Natural killer cell (primary cell): ENCODE measurements at regions of chr3 and their contacts with region 1.

Region 1: DNA sequence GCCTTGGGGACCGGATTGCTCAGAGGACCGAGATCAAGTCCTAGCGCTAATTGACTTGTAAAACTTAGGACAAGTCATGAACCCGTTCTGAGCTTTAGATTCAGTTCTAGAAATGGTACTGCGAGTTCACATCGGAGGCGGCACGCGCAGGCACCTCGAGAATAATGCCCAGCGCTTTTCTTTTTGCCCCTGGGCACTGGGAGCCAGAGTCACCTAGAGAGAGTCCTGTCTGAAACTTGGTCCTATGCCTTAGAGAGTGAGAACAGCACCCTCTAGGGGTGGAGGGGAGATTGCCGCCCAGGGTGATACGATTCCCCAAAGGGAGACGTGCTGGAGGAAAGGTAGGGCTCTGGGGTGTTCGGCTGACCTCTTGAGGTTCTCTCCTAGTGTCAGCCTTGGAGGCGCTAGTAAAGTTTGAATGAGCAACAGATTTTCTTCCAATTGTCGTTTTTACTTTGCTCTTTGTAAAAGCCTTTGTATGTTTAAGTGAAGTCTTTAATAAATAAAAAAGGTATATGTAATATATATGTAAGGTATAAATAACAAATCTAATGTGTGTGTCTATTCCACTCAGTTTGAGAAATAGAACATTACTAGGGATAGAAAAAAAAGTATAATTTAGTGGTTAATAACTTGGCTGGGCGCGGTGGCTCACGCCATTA is 826 bp downstream of the EEF1AKMT4 start:
- DNase-seq: peak; percentile 82 to 93
- ATAC-seq: peak; percentile 63 to 82 (median 64)
- H3K4me3 ChIP-seq: peak overlapping the region; percentile 76
- H3K4me3 Mint-ChIP-seq: peak overlapping the region; percentile 100
- H3K27ac ChIP-seq: peak overlapping the region; percentile 22
- H3K27ac Mint-ChIP-seq: peak overlapping the region; percentile 94 to 99
- H3K4me1 ChIP-seq: peaks cover 20% of the 10 kb centered on the region
- H3K4me1 Mint-ChIP-seq: peaks cover 17 to 21% of the 10 kb centered on the region in 2 donors
- H3K27me3 ChIP-seq: no peaks in the 10 kb centered on the region
- H3K27me3 Mint-ChIP-seq: no peaks in the 10 kb centered on the region
- CTCF ChIP-seq: peak; percentile 93

Region 2: GRCh38 chr3:184050217-184050847 is 200.0 kb before region 1 on chr3:
- intact Hi-C with region 1: no loop called
- DNase-seq: no peak
- ATAC-seq: no peak
- H3K4me3 ChIP-seq: no peak overlapping the region
- H3K4me3 Mint-ChIP-seq: no peak overlapping the region
- H3K27ac ChIP-seq: no peak overlapping the region
- H3K27ac Mint-ChIP-seq: no peak overlapping the region
- H3K4me1 ChIP-seq: no peaks in the 10 kb centered on the region
- H3K4me1 Mint-ChIP-seq: no peaks in the 10 kb centered on the region
- H3K27me3 ChIP-seq: no peaks in the 10 kb centered on the region
- H3K27me3 Mint-ChIP-seq: peaks cover 0 to 9% of the 10 kb centered on the region in 2 donors
- CTCF ChIP-seq: no peak

Region 3: DNA sequence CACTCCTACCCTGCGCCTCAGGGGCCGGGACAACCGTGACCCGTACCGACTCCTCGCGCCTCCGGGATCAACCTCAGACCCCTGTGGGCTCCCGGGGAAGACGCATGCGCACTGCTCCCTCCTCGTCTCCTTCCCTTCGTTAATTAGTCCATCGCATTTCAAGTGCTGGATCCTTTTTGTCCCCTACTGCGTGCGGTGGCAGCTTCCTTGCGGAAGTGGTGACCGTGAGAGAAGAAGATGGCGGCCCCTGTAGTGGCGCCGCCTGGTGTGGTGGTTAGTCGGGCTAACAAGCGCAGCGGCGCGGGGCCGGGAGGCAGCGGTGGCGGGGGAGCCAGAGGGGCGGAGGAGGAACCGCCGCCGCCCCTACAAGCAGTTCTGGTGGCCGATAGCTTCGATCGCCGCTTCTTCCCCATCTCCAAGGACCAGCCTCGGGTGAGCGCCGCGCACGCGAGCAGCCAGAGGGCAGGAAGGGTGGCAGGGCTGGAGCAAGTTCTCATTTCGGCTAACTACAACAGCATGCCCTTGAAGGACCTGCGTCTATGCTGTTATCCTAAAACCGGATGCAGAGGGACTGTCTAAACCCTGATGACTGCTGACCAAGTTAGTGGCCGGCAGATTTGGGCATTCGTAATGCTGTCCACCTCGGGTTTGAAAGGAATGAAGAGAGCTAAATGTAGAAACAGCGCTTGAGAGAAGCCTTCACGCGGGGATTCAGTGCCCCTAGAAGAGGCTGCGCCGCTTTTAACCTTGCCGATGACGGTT is 115.0 kb before region 1 on chr3 and contains the start of gene EIF2B5:
- intact Hi-C with region 1: loop called (anchors 10 kb)
- DNase-seq: peak; percentile 73 to 94
- ATAC-seq: peak; percentile 90 to 94 (median 93)
- H3K4me3 ChIP-seq: peak within 1 kb of the TSS; percentile 97
- H3K4me3 Mint-ChIP-seq: peak within 1 kb of the TSS; percentile 99
- H3K27ac ChIP-seq: peak within 1 kb of the TSS; percentile 87
- H3K27ac Mint-ChIP-seq: peak within 1 kb of the TSS; percentile 93
- H3K4me1 ChIP-seq: peaks cover 18% of the 10 kb centered on the region
- H3K4me1 Mint-ChIP-seq: peaks cover 48 to 52% of the 10 kb centered on the region in 2 donors
- H3K27me3 ChIP-seq: no peaks in the 10 kb centered on the region
- H3K27me3 Mint-ChIP-seq: no peaks in the 10 kb centered on the region
- CTCF ChIP-seq: no peak
- total RNA-seq, gene EIF2B5: 44.5 to 59.4 (median 54.8) TPM

Region 4: DNA sequence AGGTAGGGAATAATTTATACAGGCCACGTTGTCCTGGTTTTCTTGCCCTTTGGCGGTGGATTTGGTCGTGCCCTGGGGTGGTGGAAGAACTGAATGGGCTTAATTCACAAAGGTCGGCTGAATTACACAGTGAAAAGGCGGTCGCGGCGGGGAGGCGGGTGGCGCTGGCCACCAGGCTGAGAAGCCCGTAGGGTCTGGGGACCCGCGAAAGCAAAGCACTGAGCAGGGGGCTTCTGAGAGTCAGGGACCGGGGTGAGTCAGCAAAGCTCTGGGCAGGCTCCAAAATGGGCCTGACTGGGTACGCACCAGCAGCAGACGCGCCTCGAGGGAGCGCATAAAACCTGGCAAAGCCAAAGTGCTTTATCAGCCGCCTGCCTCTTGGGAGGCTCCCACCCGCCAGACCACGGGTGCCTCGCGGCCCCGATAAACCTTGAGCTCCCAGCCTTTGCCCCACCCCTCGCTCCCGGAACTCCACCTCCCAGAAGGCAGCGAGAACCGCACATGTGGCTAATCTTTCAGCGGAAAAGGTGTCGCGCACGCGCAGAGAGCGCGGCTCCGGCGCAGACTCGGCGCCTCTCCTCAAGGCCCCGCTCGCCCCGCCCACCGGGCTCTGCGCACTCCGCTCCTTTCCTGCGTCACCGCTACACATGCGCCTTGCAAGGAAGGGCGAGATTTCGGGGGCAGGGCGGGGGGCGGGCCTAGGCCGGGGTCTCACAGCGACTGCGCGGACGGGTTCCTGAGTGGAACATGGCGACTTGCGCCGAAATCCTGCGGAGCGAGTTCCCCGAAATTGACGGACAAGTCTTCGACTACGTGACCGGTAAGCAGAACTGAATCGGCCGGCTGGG is 64.6 kb before region 1 on chr3 and contains the start of gene ABCF3:
- intact Hi-C with region 1: loop called (anchors 1 kb)
- DNase-seq: peak; percentile 99 to 100
- ATAC-seq: peak; percentile 94 to 97 (median 94)
- H3K4me3 ChIP-seq: peak within 1 kb of the TSS; percentile 81
- H3K4me3 Mint-ChIP-seq: peak within 1 kb of the TSS; percentile 97
- H3K27ac ChIP-seq: peak within 1 kb of the TSS; percentile 74
- H3K27ac Mint-ChIP-seq: peak within 1 kb of the TSS; percentile 86 to 96
- H3K4me1 ChIP-seq: peaks cover 28% of the 10 kb centered on the region
- H3K4me1 Mint-ChIP-seq: peaks cover 36 to 40% of the 10 kb centered on the region in 2 donors
- H3K27me3 ChIP-seq: no peaks in the 10 kb centered on the region
- H3K27me3 Mint-ChIP-seq: no peaks in the 10 kb centered on the region
- CTCF ChIP-seq: no peak
- total RNA-seq, gene ABCF3: 128 to 168 (median 157) TPM

Region 5: DNA sequence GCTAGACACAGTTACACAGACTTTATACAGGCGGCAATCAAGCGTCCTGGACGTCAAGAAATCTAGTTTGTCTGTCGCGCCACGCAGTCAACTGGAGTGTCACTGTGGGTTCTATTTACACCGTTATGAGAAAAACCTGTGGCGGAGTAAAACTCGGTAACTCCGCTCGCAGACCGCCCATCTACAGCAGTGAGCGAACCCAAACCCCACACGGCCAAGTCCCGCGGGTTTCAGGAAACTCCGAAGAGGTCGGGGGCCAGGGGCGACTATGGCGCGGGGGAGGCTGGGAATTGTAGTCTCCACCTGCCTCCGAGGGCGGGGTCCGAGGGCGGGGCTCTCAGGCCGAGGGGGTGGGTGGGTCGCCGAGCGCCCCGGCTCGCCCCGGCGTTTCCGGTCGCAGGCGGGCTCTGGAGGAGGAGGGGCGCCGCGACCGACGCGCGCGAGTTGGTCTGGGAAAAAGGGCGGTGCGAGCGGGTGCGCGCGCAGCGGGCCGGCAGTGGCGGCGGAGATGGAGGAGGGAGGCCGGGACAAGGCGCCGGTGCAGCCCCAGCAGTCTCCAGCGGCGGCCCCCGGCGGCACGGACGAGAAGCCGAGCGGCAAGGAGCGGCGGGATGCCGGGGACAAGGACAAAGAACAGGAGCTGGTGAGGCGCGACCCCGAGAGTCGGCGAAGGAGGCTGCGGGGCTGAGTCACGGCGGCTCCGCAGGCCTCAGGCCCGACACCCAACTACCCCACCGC is 48.6 kb after region 1 on chr3 and contains the start of gene PSMD2:
- intact Hi-C with region 1: loop called (anchors 1 kb)
- DNase-seq: peak; percentile 93 to 98
- ATAC-seq: peak; percentile 92 to 99 (median 96)
- H3K4me3 ChIP-seq: peak within 1 kb of the TSS; percentile 72
- H3K4me3 Mint-ChIP-seq: peak within 1 kb of the TSS; percentile 88
- H3K27ac ChIP-seq: peak within 1 kb of the TSS; percentile 80
- H3K27ac Mint-ChIP-seq: peak within 1 kb of the TSS; percentile 85 to 90
- H3K4me1 ChIP-seq: peaks cover 18% of the 10 kb centered on the region
- H3K4me1 Mint-ChIP-seq: peaks cover 9 to 22% of the 10 kb centered on the region in 2 donors
- H3K27me3 ChIP-seq: no peaks in the 10 kb centered on the region
- H3K27me3 Mint-ChIP-seq: no peaks in the 10 kb centered on the region
- CTCF ChIP-seq: no peak
- total RNA-seq, gene PSMD2: 218 to 237 (median 231) TPM